ENCODE measurements at regions of chr10 and their contacts with region 1.

Region 1: DNA sequence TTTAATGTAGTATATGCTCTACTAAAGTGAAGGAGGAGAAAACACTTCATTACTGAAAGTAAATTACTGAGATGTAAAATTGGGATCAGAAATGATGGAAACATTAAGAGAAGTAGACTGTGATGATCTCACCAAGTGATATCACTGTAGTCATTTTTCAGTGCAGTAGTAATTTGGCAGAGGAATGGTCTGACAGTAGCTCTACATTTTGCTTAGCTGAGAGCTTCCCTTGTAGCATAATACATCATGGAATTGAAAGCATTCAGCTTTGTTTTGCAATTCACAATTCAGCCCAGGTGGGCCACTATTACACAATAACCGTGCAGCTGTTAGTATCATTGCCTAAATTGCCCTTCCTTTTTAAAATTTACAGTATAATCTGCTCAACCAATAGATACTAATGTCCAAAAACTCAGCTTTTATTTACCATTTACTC is 19.4 kb upstream of the CABCOCO1 start:
- DNase-seq: no peak
- H3K4me3 ChIP-seq: no peak overlapping the region
- H3K4me3 Mint-ChIP-seq: no peak overlapping the region
- H3K27ac Mint-ChIP-seq: no peak overlapping the region
- H3K4me1 ChIP-seq: no peaks in the 10 kb centered on the region
- H3K4me1 Mint-ChIP-seq: no peaks in the 10 kb centered on the region
- H3K27me3 ChIP-seq: peaks cover 3% of the 10 kb centered on the region
- H3K27me3 Mint-ChIP-seq: peaks cover 12% of the 10 kb centered on the region
- CTCF ChIP-seq: no peak

Region 2: DNA sequence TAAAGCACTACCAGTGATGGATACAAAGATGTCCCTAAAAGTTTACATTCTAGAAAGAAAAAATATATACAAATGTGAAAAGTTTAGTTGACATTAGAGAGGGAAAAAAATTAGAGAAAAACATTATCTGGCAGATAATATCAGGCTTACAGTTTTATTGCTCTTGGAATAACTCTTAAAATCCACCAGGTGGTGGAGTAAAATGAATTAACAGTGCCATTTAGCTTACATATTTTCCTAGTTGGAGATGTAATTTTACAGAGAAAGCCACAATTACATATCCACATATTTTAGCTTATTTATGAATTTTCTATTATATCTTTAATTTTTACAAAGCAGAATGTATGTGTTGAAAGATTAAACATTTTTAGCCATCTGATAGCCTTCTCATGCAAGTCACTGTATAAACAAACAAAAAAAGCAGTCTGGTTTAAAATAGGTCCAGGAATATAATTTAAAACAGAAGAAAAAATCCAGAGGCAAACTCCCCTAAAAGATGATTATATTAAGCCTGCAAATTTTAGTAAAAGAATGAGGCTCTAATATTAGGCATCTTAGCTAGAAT is 25.9 kb after region 1 on chr10:
- CTCF ChIA-PET with region 1: no interaction called
- POLR2A ChIA-PET with region 1: no interaction called
- intact Hi-C with region 1: no loop called
- DNase-seq: no peak
- H3K4me3 ChIP-seq: no peak overlapping the region
- H3K4me3 Mint-ChIP-seq: no peak overlapping the region
- H3K27ac Mint-ChIP-seq: no peak overlapping the region
- H3K4me1 ChIP-seq: no peaks in the 10 kb centered on the region
- H3K4me1 Mint-ChIP-seq: no peaks in the 10 kb centered on the region
- H3K27me3 ChIP-seq: no peaks in the 10 kb centered on the region
- H3K27me3 Mint-ChIP-seq: peaks cover 9% of the 10 kb centered on the region
- CTCF ChIP-seq: no peak

Region 3: GRCh38 chr10:61804414-61804813 is 161.1 kb after region 1 on chr10:
- CTCF ChIA-PET with region 1: no interaction called
- POLR2A ChIA-PET with region 1: no interaction called
- intact Hi-C with region 1: no loop called
- DNase-seq: no peak
- H3K4me3 ChIP-seq: no peak overlapping the region
- H3K4me3 Mint-ChIP-seq: no peak overlapping the region
- H3K27ac Mint-ChIP-seq: no peak overlapping the region
- H3K4me1 ChIP-seq: no peaks in the 10 kb centered on the region
- H3K4me1 Mint-ChIP-seq: no peaks in the 10 kb centered on the region
- H3K27me3 ChIP-seq: no peaks in the 10 kb centered on the region
- H3K27me3 Mint-ChIP-seq: no peaks in the 10 kb centered on the region
- CTCF ChIP-seq: no peak

Region 4: GRCh38 chr10:62082729-62083411 is 439.5 kb after region 1 on chr10:
- CTCF ChIA-PET with region 1: no interaction called
- POLR2A ChIA-PET with region 1: interaction called, 10 read pairs
- intact Hi-C with region 1: no loop called
- DNase-seq: no peak
- H3K4me3 ChIP-seq: no peak overlapping the region
- H3K4me3 Mint-ChIP-seq: no peak overlapping the region
- H3K27ac Mint-ChIP-seq: peak overlapping the region; percentile 50
- H3K4me1 ChIP-seq: peaks cover 36% of the 10 kb centered on the region
- H3K4me1 Mint-ChIP-seq: peaks cover 43% of the 10 kb centered on the region
- H3K27me3 ChIP-seq: no peaks in the 10 kb centered on the region
- H3K27me3 Mint-ChIP-seq: no peaks in the 10 kb centered on the region
- CTCF ChIP-seq: no peak